ENCODE measurements at regions of chr22 and their contacts with region 1.

Region 1: DNA sequence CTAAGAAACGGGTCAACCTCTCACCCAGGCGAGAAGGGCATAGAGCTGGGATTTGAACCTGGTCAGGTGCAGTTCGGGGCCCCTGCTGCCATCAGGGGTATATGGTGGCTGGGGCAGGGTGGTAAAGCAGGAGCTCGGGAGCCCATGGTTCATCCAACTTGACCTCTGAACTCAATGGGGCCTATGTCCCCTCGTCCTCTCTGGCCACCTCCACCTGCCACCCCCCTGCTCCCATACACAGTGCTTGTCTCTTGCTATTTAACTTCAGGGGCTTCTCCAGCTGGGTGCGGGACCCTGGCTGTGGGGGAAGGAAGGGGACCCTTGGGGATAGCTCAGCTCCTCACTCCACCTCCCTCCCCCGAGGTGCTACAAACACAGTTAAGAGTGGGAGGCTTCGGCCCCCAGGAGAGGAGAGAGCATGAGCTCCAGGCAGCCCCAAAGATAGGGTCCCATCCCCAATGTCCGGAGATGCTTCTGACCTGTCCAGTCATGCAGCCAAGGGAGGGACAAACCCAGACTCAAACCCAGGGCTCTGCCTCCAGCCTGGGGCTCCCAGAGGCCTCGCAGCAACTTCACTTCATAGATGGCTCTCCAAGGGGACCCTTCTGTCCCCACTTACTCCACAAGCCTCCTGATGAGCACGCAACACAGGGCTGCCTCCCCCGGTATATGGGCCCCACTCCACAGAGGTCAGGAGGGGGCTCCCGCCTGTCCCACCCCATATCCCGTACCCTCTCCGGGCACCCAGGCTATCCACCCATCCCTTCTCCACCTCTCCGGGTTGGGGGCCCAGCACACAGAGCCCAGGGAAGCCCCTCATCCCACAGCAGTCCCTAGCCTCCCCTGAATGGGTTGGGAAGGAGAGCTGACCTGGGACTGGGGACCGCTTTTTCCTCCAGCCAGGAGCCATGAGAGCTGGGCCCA is 712 bp downstream of the IL2RB start:
- DNase-seq: no peak
- H3K4me3 Mint-ChIP-seq: peak overlapping the region; percentile 98
- H3K27ac Mint-ChIP-seq: peak overlapping the region; percentile 89
- H3K4me1 Mint-ChIP-seq: peaks cover 59% of the 10 kb centered on the region
- H3K27me3 Mint-ChIP-seq: no peaks in the 10 kb centered on the region

Region 2: GRCh38 chr22:37077884-37078485 is 71.0 kb before region 1 on chr22:
- CTCF ChIA-PET with region 1: interaction called, 18 read pairs
- POLR2A ChIA-PET with region 1: interaction called, 98 read pairs
- DNase-seq: peak; percentile 88
- H3K4me3 Mint-ChIP-seq: peak overlapping the region; percentile 1
- H3K27ac Mint-ChIP-seq: peak overlapping the region; percentile 100
- H3K4me1 Mint-ChIP-seq: peaks cover 69% of the 10 kb centered on the region
- H3K27me3 Mint-ChIP-seq: no peaks in the 10 kb centered on the region

Region 3: GRCh38 chr22:37109242-37109917 is 39.6 kb before region 1 on chr22 and contains the start of gene TMPRSS6:
- CTCF ChIA-PET with region 1: no interaction called
- POLR2A ChIA-PET with region 1: no interaction called
- DNase-seq: no peak
- H3K4me3 Mint-ChIP-seq: no peak within 1 kb of the TSS
- H3K27ac Mint-ChIP-seq: no peak within 1 kb of the TSS
- H3K4me1 Mint-ChIP-seq: peaks cover 10% of the 10 kb centered on the region
- H3K27me3 Mint-ChIP-seq: no peaks in the 10 kb centered on the region
- total RNA-seq, gene TMPRSS6: 14.0 to 14.7 TPM

Region 4: DNA sequence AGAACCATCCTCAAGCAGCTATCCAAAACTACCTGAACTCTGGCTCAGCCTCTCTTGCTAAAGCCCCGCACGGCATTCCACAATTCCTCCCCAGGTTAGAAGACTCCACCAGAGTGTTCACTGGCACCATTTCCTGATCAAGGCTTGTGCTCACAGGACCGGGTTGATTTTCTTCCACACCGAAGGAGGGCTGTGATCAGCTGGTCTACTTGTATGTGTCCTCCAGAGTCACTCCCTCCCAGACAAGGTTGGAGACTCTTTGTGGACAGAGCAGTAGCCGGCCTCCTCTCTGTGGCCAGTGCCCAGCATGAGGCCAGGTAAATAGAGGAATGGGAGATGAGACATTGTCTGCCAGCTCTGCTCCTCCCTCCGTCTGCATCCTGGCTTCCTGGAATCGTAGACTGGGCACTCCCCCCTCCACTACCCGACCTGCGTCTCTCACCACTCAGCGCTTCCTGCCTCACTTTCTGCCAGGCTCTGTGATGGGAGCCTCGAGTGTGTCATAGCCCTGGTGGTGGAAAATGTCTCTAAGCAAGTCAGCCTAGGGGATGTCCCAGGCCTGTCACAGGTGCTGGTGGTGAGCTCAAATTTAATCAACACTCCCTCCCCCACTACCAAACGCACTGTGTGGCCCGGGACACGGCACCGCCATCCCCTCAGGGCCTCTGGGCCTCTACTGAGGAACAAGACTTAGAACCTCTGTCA is 27.0 kb before region 1 on chr22:
- CTCF ChIA-PET with region 1: interaction called, 40 read pairs
- POLR2A ChIA-PET with region 1: interaction called, 502 read pairs
- DNase-seq: peak; percentile 96
- H3K4me3 Mint-ChIP-seq: peak overlapping the region; percentile 74
- H3K27ac Mint-ChIP-seq: peak overlapping the region; percentile 99
- H3K4me1 Mint-ChIP-seq: peaks cover 88% of the 10 kb centered on the region
- H3K27me3 Mint-ChIP-seq: no peaks in the 10 kb centered on the region

Region 5: GRCh38 chr22:37166675-37167066 is 17.7 kb after region 1 on chr22:
- CTCF ChIA-PET with region 1: interaction called, 113 read pairs
- POLR2A ChIA-PET with region 1: interaction called, 287 read pairs
- DNase-seq: peak; percentile 87
- H3K4me3 Mint-ChIP-seq: peak overlapping the region; percentile 71
- H3K27ac Mint-ChIP-seq: peak overlapping the region; percentile 94
- H3K4me1 Mint-ChIP-seq: peaks cover 85% of the 10 kb centered on the region
- H3K27me3 Mint-ChIP-seq: no peaks in the 10 kb centered on the region

Region 6: GRCh38 chr22:37193629-37194191 is 44.7 kb after region 1 on chr22:
- CTCF ChIA-PET with region 1: interaction called, 51 read pairs
- POLR2A ChIA-PET with region 1: interaction called, 61 read pairs
- DNase-seq: peak; percentile 44
- H3K4me3 Mint-ChIP-seq: no peak overlapping the region
- H3K27ac Mint-ChIP-seq: peak overlapping the region; percentile 64
- H3K4me1 Mint-ChIP-seq: peaks cover 46% of the 10 kb centered on the region
- H3K27me3 Mint-ChIP-seq: no peaks in the 10 kb centered on the region

Region 7: DNA sequence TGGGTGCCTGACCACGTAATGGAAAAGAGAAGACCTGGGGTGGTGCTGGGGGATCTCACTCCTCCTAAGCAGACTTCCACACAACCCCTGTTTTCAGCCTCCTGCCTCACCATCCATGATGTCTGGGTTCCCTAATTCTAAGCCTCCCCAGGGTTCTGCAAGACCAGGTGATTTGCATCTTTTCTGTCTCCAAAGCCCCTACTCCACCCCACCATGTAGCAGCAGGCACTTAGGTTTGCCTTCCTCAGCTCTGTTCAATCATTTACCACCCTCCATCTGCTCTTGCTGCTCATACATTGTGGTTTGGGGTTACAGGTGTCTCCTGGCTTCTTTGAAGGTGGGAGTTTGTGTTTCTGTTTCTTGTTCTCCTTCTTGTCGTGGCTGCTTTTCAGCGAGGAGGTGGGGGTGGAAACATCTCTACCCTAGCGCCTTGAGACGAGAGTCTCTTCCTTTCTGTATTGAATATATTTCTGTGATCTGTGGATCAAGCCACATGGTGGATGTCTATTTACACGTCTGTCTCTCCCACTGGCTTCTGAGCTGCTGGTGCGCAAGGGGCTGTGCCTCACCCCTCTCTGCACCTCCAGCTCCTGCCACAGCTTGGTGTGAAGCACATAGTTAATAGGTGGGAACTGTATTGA is 69.9 kb after region 1 on chr22:
- CTCF ChIA-PET with region 1: no interaction called
- POLR2A ChIA-PET with region 1: interaction called, 11 read pairs
- DNase-seq: peak; percentile 72
- H3K4me3 Mint-ChIP-seq: peak overlapping the region; percentile 63
- H3K27ac Mint-ChIP-seq: peak overlapping the region; percentile 93
- H3K4me1 Mint-ChIP-seq: peaks cover 65% of the 10 kb centered on the region
- H3K27me3 Mint-ChIP-seq: peaks cover 1% of the 10 kb centered on the region

Region 8: GRCh38 chr22:37229805-37230672 is 81.0 kb after region 1 on chr22:
- CTCF ChIA-PET with region 1: no interaction called
- POLR2A ChIA-PET with region 1: interaction called, 22 read pairs
- DNase-seq: peak; percentile 94
- H3K4me3 Mint-ChIP-seq: peak overlapping the region; percentile 45
- H3K27ac Mint-ChIP-seq: peak overlapping the region; percentile 97
- H3K4me1 Mint-ChIP-seq: peaks cover 90% of the 10 kb centered on the region
- H3K27me3 Mint-ChIP-seq: no peaks in the 10 kb centered on the region